HCT116 (cell line): ENCODE measurements at regions of chr12 and their contacts with region 1.

Region 1: GRCh38 chr12:29921307-29921706 is 137.6 kb upstream of the TMTC1 start:
- DNase-seq: peak; percentile 21
- ATAC-seq: peak; percentile 68
- H3K4me3 ChIP-seq: no peak overlapping the region
- H3K27ac ChIP-seq: no peak overlapping the region
- H3K4me1 ChIP-seq: peaks cover 0 to 8% of the 10 kb centered on the region in 2 experiments; a peak in 2 of 4 replicates
- H3K27me3 ChIP-seq: no peaks in the 10 kb centered on the region
- CTCF ChIP-seq: no peak
- POLR2A ChIP-seq: no peak
- RAD21 ChIP-seq: no peak

Region 2: GRCh38 chr12:29492891-29493290 is 428.4 kb before region 1 on chr12:
- CTCF ChIA-PET with region 1: no interaction called
- POLR2A ChIA-PET with region 1: no interaction called
- RAD21 ChIA-PET with region 1: no interaction called
- intact Hi-C with region 1: no loop called
- DNase-seq: no peak
- ATAC-seq: no peak
- H3K4me3 ChIP-seq: no peak overlapping the region
- H3K27ac ChIP-seq: no peak overlapping the region
- H3K4me1 ChIP-seq: no peaks in the 10 kb centered on the region
- H3K27me3 ChIP-seq: no peaks in the 10 kb centered on the region
- CTCF ChIP-seq: no peak
- POLR2A ChIP-seq: no peak
- RAD21 ChIP-seq: no peak

Region 3: DNA sequence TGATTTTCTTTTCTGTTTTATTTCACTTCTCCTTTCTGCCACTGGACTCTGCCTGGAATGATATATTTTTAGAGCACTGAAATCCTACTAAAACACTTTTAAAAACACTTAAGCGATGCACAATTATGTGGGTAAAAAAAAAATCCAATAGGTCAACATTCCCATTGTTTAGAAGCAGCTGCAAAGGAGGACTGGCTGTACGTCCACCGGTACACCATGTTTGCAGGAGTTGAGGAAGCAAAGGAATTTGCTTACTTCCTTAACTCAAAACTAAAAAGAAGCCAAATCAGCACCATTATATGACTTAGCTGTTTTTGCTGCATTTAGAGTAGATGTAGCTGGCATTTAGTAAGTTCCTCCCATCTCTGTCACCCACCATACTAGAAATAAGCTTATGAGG is 49.2 kb after region 1 on chr12:
- CTCF ChIA-PET with region 1: no interaction called
- POLR2A ChIA-PET with region 1: no interaction called
- RAD21 ChIA-PET with region 1: no interaction called
- intact Hi-C with region 1: loop called (anchors 5 kb)
- DNase-seq: no peak
- ATAC-seq: no peak
- H3K4me3 ChIP-seq: no peak overlapping the region
- H3K27ac ChIP-seq: no peak overlapping the region
- H3K4me1 ChIP-seq: no peaks in the 10 kb centered on the region
- H3K27me3 ChIP-seq: no peaks in the 10 kb centered on the region
- CTCF ChIP-seq: no peak
- POLR2A ChIP-seq: no peak
- RAD21 ChIP-seq: no peak